ENCODE measurements at regions of chr17 and their contacts with region 1.

Region 1: DNA sequence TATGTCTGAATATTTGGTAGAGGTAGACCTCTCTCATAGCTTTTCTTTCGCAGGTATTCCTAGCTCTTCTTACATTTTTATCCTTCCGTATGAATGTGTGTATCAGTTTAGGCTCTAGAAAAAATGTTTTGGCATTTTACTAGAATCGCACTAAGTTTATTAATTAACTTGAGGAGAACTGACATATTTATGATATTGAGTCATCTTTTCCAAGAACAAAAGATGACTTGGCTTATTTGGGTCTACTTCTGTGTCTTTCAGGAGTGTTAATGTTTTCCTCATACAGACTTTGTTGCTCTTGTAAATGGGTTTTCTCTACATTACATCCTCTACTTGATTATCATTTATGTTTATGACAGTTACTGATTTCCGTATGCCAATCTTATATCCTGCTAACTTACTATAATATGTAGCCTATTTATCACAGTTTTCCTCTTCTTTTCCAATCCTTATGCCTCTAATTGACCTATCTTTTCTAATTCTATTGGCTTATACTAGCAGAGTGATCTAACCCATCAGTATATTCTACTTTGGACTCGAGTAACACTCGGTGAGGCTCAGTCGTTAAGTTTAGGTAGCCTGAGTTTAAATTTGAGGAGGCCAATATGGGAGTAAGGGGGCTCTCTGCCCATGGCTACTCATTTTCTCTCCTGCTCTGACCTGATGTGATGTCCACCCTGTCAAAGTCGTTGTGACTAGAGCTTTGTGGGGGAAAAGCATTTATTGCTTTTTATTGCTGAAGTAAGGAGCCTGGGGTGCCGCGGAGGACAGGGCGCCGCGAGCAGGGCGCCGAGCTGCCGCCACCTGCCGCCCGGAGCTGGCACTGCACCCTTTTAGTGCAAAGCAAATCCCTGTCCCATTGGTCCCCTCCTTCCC is 20.0 kb downstream of the ST6GALNAC1 start:
- DNase-seq: peak; percentile 70 to 81
- ATAC-seq: peak; percentile 79 to 94 (median 90)
- H3K4me3 ChIP-seq: no peak overlapping the region
- H3K27ac ChIP-seq: no peak overlapping the region
- H3K4me1 ChIP-seq: peaks cover 0 to 8% (median 3%) of the 10 kb centered on the region in 9 donors
- H3K27me3 ChIP-seq: peaks cover 0 to 4% (median 0%) of the 10 kb centered on the region in 7 donors
- CTCF ChIP-seq: peak; percentile 93 to 98 (median 96)

Region 2: DNA sequence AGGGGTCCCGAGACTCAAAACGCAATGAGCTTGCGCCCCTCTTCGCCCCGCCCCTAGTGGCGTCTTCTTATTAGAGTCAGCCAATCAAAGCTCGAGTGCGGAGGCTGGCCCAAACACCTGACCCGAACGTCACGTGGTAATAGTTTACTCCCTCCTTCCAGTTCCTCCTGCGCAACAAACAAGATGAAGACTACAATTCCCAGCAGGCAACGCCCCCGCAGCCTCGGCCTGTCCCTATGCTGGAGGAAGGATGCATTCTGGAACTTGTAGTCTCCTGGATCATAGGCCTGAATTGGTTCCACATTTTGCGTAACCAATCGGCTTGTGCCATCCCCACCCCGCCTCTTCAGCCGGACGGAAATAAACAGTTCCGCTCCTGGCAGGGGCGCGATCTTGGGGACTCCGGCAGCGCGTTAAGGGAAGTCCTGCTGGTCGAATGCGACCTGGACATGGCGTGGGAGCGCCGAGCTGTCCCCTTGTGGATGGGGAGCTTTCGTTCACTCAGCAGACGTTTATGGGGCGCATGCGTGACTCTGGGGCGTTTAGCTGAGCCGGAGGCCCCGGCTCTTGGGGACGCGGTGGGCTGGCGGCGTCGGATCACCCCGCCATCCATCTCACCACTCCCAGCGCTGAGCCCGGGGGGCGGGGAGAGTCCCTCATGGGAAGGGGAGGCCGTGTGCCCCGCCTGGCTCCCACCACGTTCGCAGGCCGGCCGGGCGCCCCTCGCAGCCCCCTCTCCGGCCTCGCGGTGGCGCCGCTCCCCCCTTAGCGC is 768.0 kb before region 1 on chr17 and contains the start of gene WBP2:
- intact Hi-C with region 1: no loop called
- DNase-seq: peak; percentile 94 to 99
- ATAC-seq: peak; percentile 90 to 96 (median 93)
- H3K4me3 ChIP-seq: peak within 1 kb of the TSS; percentile 79 to 97 (median 83)
- H3K27ac ChIP-seq: peak within 1 kb of the TSS; percentile 96 to 99 (median 98)
- H3K4me1 ChIP-seq: peaks cover 27 to 76% (median 61%) of the 10 kb centered on the region in 9 donors
- H3K27me3 ChIP-seq: no peaks in the 10 kb centered on the region
- CTCF ChIP-seq: peak; percentile 17 to 77 (median 54)
- total RNA-seq, gene WBP2: 130 to 210 (median 173) TPM

Region 3: GRCh38 chr17:76473541-76473985 is 149.9 kb before region 1 on chr17:
- intact Hi-C with region 1: no loop called
- DNase-seq: no peak
- ATAC-seq: peak in 2 of 8 donors; percentile 3 to 6
- H3K4me3 ChIP-seq: no peak overlapping the region
- H3K27ac ChIP-seq: no peak overlapping the region
- H3K4me1 ChIP-seq: peaks cover 0 to 11% (median 0%) of the 10 kb centered on the region in 9 donors
- H3K27me3 ChIP-seq: no peaks in the 10 kb centered on the region
- CTCF ChIP-seq: peak in 6 of 9 donors; percentile 5 to 35 (median 21)

Region 4: GRCh38 chr17:76523084-76524037 is 100.1 kb before region 1 on chr17:
- intact Hi-C with region 1: loop called in 8 of 10 experiments (anchors 1 to 10 kb)
- DNase-seq: peak; percentile 63 to 81
- ATAC-seq: peak; percentile 44 to 64 (median 52)
- H3K4me3 ChIP-seq: no peak overlapping the region
- H3K27ac ChIP-seq: no peak overlapping the region
- H3K4me1 ChIP-seq: peaks cover 15 to 42% (median 35%) of the 10 kb centered on the region in 9 donors
- H3K27me3 ChIP-seq: no peaks in the 10 kb centered on the region
- CTCF ChIP-seq: peak; percentile 97 to 100 (median 100)

Region 5: DNA sequence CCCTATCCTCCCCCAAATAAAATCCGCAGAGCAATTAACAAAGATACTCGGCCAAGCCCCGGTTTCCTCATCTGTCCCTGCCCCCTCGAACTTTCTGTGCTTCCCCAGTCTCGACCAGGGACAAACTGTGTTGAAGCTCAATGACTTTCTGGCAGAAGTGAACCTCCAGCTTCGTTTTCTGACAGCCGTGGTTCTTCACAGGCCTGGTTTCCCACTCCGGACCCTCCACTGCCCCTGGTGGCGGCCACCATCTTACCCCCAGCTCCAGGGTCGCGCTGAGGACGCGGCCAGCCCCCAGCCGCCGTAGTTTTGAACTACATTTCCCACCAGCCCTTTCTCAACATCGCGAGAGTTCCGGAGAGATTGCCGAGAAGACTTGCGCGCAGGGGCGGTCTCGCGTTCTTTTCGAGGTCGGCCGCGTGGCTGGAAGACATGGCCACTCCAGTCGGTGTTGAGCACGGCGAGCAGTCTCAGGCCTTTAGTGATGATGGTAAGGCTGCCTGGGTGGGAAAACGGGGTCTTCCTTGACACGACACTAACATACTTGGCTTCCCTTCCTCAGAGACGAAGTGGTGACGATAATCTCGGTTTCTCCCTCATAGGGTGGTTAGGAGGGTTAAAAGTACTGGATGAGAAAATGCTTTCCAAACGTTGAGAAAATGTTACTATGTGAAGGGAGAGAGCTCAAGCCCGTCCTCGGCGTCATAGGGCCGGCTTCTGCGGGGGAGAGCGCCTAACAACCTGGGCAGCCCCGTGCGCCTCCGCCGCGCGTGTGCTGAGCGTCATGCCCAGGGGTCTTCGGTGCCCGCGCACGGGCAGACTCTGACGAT is 65.9 kb before region 1 on chr17:
- intact Hi-C with region 1: loop called in 7 of 10 experiments (anchors 1 to 10 kb)
- DNase-seq: peak; percentile 91 to 96
- ATAC-seq: peak; percentile 90 to 95 (median 93)
- H3K4me3 ChIP-seq: peak overlapping the region; percentile 49 to 88 (median 76)
- H3K27ac ChIP-seq: peak overlapping the region; percentile 70 to 94 (median 83)
- H3K4me1 ChIP-seq: peaks cover 0 to 67% (median 63%) of the 10 kb centered on the region in 9 donors
- H3K27me3 ChIP-seq: no peaks in the 10 kb centered on the region
- CTCF ChIP-seq: peak; percentile 32 to 69 (median 59)

Region 6: DNA sequence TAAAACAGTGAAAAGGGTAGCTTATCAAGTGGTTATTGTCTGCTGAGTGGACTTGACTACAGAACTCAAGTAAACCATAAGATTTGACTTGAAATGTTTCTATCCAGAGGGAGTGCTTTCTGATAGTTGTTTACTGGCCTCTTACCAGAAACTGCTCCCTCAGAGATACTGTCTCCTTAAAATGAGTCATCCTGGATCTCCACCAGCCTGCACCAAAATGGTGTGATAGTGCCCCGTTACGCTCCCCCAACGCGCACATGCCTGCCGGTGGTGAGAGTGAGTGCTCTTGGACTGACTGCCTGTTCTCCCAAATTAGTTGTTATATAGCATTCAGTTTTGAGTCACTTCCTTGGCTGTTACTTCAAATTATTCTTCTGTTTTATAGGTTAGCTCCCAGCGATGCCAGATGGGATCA is 60.8 kb before region 1 on chr17:
- intact Hi-C with region 1: loop called in 7 of 10 experiments (anchors 1 to 10 kb)
- DNase-seq: no peak
- ATAC-seq: peak in 6 of 8 donors; percentile 33 to 76 (median 59)
- H3K4me3 ChIP-seq: no peak overlapping the region
- H3K27ac ChIP-seq: peak overlapping the region in 8 of 10 donors; percentile 15 to 72 (median 41)
- H3K4me1 ChIP-seq: peaks cover 0 to 72% (median 53%) of the 10 kb centered on the region in 9 donors
- H3K27me3 ChIP-seq: no peaks in the 10 kb centered on the region
- CTCF ChIP-seq: no peak

Region 7: DNA sequence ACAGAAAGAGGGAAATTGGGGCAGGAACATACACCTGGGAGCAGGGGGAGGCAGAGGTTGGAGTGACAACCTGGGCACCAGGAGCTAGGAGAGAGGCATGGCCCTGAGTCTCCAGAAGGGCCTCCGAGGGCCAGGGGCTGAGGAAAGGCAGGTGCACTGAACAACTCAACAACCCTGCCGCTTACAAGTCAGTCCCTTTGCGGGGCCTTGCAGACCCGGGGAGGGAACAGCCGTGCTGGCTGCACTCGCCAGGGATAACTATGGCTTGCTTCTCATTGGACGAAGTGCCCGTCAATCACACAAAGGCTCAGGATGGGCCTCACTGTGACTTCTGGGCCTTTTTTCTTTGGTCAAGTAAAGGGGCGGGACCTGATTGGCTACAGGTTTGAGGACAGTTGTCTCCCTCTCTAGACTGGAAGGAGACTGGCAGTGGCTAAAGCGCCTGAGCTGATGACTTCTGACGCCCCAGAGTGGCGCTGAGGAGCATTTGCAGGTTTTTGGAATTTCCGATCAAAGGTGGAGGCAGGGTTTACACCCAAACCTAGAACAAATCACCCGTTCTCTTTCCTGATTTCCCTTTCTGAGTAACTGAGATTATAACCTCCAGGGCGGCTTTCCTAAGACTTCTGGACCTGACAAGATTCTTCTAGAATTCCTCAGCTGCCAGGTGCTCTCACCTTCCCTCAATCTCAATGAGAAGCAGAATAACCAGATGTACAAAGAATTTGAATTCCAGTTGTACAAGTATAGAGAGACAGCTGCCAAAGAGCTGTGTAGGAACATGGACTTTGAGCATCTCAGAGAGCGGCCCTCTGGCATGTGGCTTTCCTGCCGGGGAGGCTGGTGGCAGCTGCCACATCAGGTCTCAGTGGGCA is 10.3 kb before region 1 on chr17:
- intact Hi-C with region 1: no loop called
- DNase-seq: no peak
- ATAC-seq: no peak
- H3K4me3 ChIP-seq: no peak overlapping the region
- H3K27ac ChIP-seq: no peak overlapping the region
- H3K4me1 ChIP-seq: no peaks in the 10 kb centered on the region
- H3K27me3 ChIP-seq: no peaks in the 10 kb centered on the region
- CTCF ChIP-seq: no peak